ENCODE measurements at regions of chrX and their contacts with region 1.

Region 1: DNA sequence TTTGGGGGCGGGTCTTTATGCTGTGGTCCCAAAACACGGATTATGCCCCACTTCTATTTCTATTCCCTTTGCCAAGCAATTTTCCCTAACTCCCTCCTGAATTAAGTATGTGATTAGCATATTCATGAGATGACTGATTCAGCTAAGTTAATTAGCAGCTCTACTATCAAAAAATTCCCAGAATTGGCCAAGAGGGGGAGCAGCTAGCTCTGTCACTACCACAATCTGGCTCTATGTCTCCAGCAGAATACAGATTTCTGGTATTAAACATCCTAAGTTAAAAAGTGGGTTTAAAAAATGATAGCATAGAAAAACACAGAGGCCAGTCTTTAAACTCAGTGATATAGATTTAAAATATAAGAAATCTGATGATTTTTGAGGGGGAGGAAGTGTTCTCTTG is 80.3 kb downstream of the GPC4 start:
- DNase-seq: no peak

Region 2: DNA sequence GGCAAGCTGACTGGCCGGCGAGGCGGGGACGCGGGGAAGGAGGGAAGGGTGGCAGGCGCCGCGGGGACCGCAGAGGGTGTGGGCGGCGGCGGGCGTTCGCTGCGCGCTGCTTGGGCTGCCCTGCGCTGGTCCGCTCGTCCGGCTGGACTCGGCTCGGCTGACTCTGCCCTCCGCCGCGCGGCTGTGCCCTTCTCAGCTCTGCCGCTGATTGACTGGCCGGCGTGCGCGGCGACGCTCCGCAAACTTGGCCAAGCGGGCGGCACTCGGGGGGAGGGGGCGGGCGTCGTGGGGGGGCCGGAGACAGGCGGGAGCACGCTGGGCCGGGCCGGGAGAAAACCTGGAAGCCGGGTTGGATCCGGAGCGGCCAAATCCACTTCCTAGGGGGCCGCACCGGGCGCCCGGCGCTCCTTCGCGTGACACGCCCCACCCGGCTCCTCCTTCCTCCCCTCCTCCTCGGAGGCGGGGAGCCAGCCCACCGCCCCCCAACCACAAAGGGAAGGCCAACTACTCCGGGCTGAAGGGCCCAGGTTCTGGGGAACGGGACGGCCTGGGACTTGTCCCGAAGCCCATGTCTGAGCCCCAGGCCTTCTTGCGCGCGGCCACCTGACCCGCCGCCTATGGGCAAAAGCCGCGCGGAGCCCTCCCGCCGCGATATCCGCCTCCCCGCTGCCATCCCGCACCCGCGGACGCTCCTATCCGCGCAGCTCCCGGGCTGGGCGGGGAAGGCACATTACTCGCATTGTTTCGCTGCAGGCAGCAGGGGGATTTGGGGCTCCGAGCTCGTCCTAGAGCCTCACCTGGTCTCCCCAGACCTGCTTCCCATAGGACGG is 80.5 kb after region 1 on chrX and contains the start of gene GPC4:
- intact Hi-C with region 1: loop called in 1 of 2 experiments (anchors 10 kb)
- DNase-seq: peak; percentile 78
- total RNA-seq, gene GPC4: 17.3 to 19.2 TPM

Region 3: GRCh38 chrX:133668225-133668931 is 333.4 kb after region 1 on chrX:
- intact Hi-C with region 1: loop called in 1 of 2 experiments (anchors 5 kb)
- DNase-seq: no peak

Measured in posterior vena cava (tissue), 2 donors.